Pancreas (tissue), 10 donors: ENCODE measurements at regions of chr14 and their contacts with region 1.

Region 1: DNA sequence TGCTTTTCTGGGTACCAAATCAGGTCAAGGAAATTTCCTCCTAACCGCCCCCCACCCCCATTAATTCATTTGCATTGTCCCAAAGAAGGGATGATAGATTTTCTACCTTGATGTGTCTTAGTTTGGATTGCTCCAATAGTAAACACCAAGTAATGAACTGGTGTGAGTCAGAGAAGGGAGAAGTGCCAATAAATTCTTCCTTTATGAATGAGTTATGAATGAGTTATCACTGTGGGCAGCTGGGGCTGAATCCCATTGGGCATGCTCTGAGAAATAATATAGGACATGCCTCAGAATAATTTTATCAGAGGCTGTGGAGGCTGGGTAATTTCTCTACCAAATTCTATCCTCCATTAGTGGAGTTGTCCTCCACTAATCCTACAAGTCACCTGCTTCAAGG is 277.9 kb upstream of the FLRT2 start:
- DNase-seq: no peak
- ATAC-seq: peak in 3 of 4 donors; percentile 33 to 56 (median 50)
- H3K4me3 ChIP-seq: no peak overlapping the region
- H3K27ac ChIP-seq: no peak overlapping the region
- H3K4me1 ChIP-seq: no peaks in the 10 kb centered on the region
- H3K27me3 ChIP-seq: no peaks in the 10 kb centered on the region
- CTCF ChIP-seq: no peak

Region 2: DNA sequence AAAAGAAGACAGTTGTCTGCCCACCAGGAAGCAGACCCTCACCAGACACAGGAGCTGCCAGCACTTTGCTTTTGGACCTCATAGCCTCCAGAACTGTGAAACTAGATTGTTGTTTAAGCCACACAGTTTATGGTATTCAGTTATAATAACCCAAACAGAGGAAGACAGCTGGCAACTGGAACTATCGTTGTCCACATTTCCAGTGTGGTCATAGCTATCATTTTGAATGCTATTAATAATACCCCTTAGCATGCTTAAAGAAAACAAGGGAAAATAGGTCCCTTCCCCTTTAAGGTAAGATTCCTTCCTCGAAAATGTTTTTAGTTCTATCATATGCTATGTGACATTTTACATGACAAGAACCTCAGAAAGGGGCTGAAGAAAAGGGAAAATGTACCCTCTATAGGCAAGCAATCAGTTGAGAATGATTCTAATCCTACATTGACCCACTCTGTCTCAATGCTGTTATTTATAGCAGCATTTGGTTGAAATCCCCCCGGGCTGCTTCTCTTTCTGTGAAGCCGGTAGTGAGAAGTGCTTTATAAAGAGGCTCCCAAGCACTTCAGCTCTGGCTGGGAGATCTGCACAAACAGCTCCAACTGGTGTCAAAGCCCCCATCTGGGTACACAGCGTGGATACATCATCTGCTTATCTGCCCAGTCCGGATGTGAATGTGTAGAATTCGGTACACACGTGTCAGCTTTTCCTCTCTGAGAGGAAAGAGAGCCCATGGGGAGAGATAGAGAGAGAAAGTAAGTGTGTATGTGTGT is 56.7 kb after region 1 on chr14:
- intact Hi-C with region 1: loop called in 1 of 3 experiments (anchors 10 kb)
- DNase-seq: no peak
- ATAC-seq: no peak
- H3K4me3 ChIP-seq: no peak overlapping the region
- H3K27ac ChIP-seq: no peak overlapping the region
- H3K4me1 ChIP-seq: no peaks in the 10 kb centered on the region
- H3K27me3 ChIP-seq: no peaks in the 10 kb centered on the region
- CTCF ChIP-seq: no peak

Region 3: GRCh38 chr14:85358136-85358785 is 106.2 kb after region 1 on chr14:
- intact Hi-C with region 1: no loop called
- DNase-seq: no peak
- ATAC-seq: no peak
- H3K4me3 ChIP-seq: no peak overlapping the region
- H3K27ac ChIP-seq: no peak overlapping the region
- H3K4me1 ChIP-seq: peaks cover 0 to 5% (median 0%) of the 10 kb centered on the region in 3 donors
- H3K27me3 ChIP-seq: no peaks in the 10 kb centered on the region
- CTCF ChIP-seq: no peak